Activated CD8-positive, alpha-beta memory T cell treated with anti-CD3 and anti-CD28 coated beads, Interleukin-2, amount 10 ng/mL, durations not matched to agents 7 days and 5 days (primary cell): ENCODE measurements at regions of chr2 and their contacts with region 1.

Region 1: DNA sequence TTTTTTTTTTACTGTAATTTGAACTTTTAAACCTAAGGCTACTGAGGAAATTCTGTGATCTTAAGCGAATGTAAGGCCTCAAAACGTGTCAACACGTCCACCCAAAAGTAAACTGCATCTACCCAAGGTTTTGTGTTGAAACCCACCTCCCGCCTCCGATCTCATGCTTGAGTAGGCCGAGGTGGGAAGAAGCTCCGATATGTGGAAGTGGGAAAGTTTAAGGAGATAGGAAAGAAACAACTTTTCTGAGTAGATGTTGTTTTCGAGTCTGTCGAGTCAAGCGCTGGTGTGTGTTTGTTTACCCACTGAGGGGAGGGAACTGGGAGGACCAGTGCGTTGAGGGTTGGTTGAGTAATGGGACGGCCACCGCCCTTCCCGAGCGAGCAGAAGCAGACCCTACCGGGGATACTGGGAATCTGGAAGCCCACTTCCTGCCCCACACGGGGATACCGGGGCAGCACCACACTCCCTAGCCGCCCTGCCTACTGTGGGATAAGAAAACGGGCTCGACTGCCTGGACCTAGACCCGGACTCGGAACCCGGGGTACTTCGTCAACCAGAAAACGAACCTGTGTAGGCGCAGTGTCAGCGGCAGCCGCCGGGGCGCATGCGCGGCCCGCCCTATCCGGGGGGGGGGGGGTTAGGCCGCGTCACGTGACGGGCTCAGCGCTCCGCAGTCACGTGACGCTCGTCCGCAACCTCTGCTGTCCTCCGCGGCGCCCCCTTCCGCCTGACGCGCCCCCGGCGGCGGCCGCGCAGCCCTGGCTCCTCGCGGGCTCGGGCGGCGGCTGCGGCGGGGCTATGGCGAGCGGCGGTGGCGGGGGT is at the start of gene RETREG2:
- DNase-seq: peak; percentile 86
- ATAC-seq: peak; percentile 54
- H3K4me3 Mint-ChIP-seq: peak within 1 kb of the TSS; percentile 79
- H3K27ac Mint-ChIP-seq: peak within 1 kb of the TSS; percentile 99
- H3K4me1 Mint-ChIP-seq: peaks cover 66% of the 10 kb centered on the region
- H3K27me3 Mint-ChIP-seq: no peaks in the 10 kb centered on the region
- total RNA-seq, gene RETREG2: 95.8 to 110 TPM

Region 2: GRCh38 chr2:219199470-219200211 is 21.9 kb after region 1 on chr2:
- CTCF ChIA-PET with region 1: interaction called, 65 read pairs
- DNase-seq: no peak
- ATAC-seq: peak; percentile 26
- H3K4me3 Mint-ChIP-seq: no peak overlapping the region
- H3K27ac Mint-ChIP-seq: peak overlapping the region; percentile 45
- H3K4me1 Mint-ChIP-seq: peaks cover 18% of the 10 kb centered on the region
- H3K27me3 Mint-ChIP-seq: no peaks in the 10 kb centered on the region

Region 3: DNA sequence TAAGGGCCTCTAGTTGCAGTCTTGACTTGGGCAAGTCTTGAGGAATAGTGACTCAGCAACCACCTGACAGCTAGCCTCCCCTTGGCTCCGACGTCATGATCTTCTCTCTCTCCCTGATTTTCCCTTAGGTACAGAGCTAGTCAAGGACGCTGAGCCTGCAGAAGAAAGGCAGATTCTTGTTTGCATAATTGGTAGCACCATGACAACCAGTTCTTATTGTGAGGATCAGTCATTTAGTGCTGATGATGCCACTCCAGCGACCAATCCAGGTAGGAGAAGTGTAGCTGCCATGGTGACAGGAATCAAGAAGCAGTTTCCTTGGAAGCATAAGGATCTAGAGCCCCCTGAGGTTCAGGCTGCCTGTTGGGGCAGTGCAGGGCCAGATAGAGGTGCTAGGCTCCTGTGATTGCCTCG is 157.6 kb after region 1 on chr2:
- CTCF ChIA-PET with region 1: no interaction called
- DNase-seq: no peak
- ATAC-seq: no peak
- H3K4me3 Mint-ChIP-seq: no peak overlapping the region
- H3K27ac Mint-ChIP-seq: no peak overlapping the region
- H3K4me1 Mint-ChIP-seq: no peaks in the 10 kb centered on the region
- H3K27me3 Mint-ChIP-seq: peaks cover 77% of the 10 kb centered on the region